GM12878 (cell line): ENCODE measurements at regions of chr9 and their contacts with region 1.

Region 1: DNA sequence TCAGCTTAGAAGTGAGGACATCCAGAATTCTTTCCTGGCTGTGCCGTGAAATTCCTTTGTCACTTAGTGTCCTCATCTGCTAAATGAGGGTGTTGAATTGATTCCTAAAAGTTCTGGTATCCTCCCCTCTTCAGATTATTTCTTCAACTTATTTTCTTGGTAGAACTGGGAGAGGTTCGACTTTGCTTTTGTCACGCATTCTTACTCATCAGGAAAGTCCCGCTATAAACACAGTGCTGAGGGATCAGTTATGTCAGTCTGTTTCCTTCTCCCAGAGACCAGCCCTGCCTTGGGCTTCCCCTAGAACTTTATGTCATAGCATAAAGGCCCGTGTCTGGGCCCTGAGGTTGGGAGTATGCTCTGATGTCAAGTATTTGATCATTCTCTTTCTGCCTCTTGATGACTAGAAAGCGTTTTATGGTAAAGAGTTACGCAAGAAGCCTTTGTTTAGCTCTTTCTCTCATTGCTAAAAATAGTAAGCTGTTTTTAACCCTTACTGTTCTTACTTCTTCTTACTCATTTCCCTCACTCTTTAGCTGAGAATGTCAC is 29.6 kb downstream of the MTAP start:
- DNase-seq: peak; percentile 71
- ATAC-seq: peak; percentile 88
- H3K4me3 ChIP-seq: peak overlapping the region; percentile 24; the same call in 1 of the 2 replicates
- H3K27ac ChIP-seq: peak overlapping the region; percentile 77
- H3K4me1 ChIP-seq: peaks cover 38% of the 10 kb centered on the region
- H3K27me3 ChIP-seq: no peaks in the 10 kb centered on the region
- CTCF ChIP-seq: no peak
- EP300 ChIP-seq: peak; percentile 62 to 71; a peak in 2 of 4 replicates
- POLR2A ChIP-seq: no peak
- RAD21 ChIP-seq: no peak

Region 2: GRCh38 chr9:21119093-21119770 is 712.8 kb before region 1 on chr9:
- CTCF ChIA-PET with region 1: no interaction called
- POLR2A ChIA-PET with region 1: no interaction called
- RAD21 ChIA-PET with region 1: no interaction called
- SMC1A ChIA-PET with region 1: no interaction called
- in situ Hi-C with region 1: no loop called
- intact Hi-C with region 1: no loop called
- DNase-seq: no peak
- ATAC-seq: peak; percentile 69
- H3K4me3 ChIP-seq: no peak overlapping the region
- H3K27ac ChIP-seq: no peak overlapping the region
- H3K4me1 ChIP-seq: peaks cover 10% of the 10 kb centered on the region
- H3K27me3 ChIP-seq: no peaks in the 10 kb centered on the region
- CTCF ChIP-seq: no peak
- EP300 ChIP-seq: no peak
- POLR2A ChIP-seq: no peak
- RAD21 ChIP-seq: no peak

Region 3: DNA sequence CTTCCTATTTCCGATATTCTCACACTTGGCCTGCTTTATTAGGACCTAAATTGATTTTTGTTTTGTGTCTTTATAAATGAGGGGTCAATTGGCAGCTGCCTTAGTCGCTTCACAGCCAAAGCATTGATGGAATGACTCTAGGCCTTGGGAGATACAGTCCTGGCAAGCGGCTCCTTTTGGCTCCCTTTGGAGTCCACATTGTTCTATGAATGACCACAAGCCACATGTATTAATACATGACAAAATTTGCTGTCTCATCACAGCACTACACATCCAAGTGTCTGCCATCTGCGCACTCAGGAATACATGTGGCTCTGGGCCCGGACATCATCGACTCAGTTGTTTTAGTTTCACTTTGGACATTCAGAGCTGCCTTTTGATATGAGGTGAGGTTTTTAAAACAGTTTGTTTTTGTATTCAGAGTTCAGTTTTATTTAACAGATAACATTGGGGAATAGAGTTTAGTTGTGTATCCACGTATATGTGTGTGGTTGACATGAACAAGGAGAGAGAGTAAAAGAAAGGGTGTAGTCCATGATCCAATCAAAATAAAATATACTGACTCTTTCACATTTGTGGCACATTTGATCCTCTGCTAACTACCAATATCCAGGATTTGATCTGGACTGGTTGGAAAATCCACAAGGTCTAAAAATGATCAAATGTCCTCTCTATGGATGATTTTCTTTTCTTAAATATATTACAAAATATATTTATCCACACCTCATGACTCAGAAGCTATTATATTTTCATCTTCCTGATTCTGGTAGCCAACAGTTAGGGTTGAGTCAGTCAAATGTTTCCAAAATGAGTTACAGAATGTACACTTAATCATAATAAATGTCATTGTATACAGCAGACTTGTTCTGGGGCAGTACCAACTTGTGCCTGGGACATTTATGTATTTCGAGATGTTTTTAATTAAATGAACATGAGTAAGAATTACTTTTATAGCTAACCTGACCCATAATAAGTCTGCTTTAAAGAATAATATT is 143.6 kb before region 1 on chr9:
- CTCF ChIA-PET with region 1: no interaction called
- POLR2A ChIA-PET with region 1: no interaction called
- RAD21 ChIA-PET with region 1: no interaction called
- SMC1A ChIA-PET with region 1: no interaction called
- in situ Hi-C with region 1: no loop called
- intact Hi-C with region 1: no loop called
- DNase-seq: no peak
- ATAC-seq: no peak
- H3K4me3 ChIP-seq: no peak overlapping the region
- H3K27ac ChIP-seq: no peak overlapping the region
- H3K4me1 ChIP-seq: no peaks in the 10 kb centered on the region
- H3K27me3 ChIP-seq: no peaks in the 10 kb centered on the region; a peak in 2 of 4 replicates
- CTCF ChIP-seq: no peak
- EP300 ChIP-seq: no peak
- POLR2A ChIP-seq: no peak
- RAD21 ChIP-seq: no peak

Region 4: GRCh38 chr9:21796768-21797167 is 35.3 kb before region 1 on chr9:
- CTCF ChIA-PET with region 1: no interaction called
- POLR2A ChIA-PET with region 1: no interaction called
- RAD21 ChIA-PET with region 1: no interaction called
- SMC1A ChIA-PET with region 1: no interaction called
- in situ Hi-C with region 1: no loop called
- intact Hi-C with region 1: no loop called
- DNase-seq: no peak
- ATAC-seq: no peak
- H3K4me3 ChIP-seq: no peak overlapping the region
- H3K27ac ChIP-seq: no peak overlapping the region
- H3K4me1 ChIP-seq: peaks cover 5% of the 10 kb centered on the region
- H3K27me3 ChIP-seq: peaks cover 0 to 19% of the 10 kb centered on the region in 2 experiments; a peak in 2 of 4 replicates
- CTCF ChIP-seq: no peak
- EP300 ChIP-seq: no peak
- POLR2A ChIP-seq: no peak
- RAD21 ChIP-seq: no peak

Region 5: DNA sequence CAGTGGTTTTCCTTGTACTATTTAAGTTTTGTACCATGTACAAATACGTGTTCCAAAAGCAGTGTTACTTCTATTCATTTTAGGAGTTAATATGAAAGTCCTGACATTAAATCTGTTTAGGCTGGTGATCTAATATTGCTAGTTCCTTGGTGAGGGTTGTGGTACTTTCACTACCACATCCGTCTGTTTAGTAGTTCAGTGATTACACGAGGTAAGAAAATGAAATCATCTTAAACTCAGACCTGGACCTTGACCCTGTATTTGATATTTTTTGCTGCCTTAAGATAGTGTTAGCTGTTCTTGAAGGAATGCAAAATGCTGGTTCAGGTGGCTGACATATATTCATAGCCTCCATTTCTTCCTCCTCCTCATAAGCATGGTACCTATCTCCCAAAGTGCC is 20.7 kb after region 1 on chr9:
- CTCF ChIA-PET with region 1: interaction called, 5 read pairs
- POLR2A ChIA-PET with region 1: no interaction called
- RAD21 ChIA-PET with region 1: no interaction called
- SMC1A ChIA-PET with region 1: interaction called, 3 read pairs
- in situ Hi-C with region 1: no loop called
- intact Hi-C with region 1: loop called (anchors 1 kb)
- DNase-seq: peak; percentile 27
- ATAC-seq: peak; percentile 99
- H3K4me3 ChIP-seq: no peak overlapping the region
- H3K27ac ChIP-seq: no peak overlapping the region
- H3K4me1 ChIP-seq: peaks cover 5% of the 10 kb centered on the region; the same call in 1 of the 2 replicates
- H3K27me3 ChIP-seq: no peaks in the 10 kb centered on the region
- CTCF ChIP-seq: no peak
- EP300 ChIP-seq: peak in 1 of 2 experiments; percentile 72; a peak in 1 of 4 replicates
- POLR2A ChIP-seq: no peak
- RAD21 ChIP-seq: no peak

Region 6: DNA sequence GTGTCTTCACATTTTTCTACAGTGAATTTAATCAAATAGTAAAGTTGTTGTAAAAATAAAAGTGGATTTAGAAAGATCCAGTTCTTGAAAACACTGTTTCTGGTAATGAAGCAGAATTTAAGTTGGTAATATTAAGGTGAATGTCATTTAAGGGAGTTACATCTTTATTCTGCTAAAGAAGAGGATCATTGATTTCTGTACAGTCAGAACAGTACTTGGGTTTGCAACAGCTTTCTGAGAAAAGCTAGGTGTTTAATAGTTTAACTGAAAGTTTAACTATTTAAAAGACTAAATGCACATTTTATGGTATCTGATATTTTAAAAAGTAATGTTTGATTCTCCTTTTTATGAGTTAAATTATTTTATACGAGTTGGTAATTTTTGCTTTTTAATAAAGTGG is 30.8 kb after region 1 on chr9:
- CTCF ChIA-PET with region 1: interaction called, 4 read pairs
- POLR2A ChIA-PET with region 1: no interaction called
- RAD21 ChIA-PET with region 1: interaction called, 3 read pairs
- SMC1A ChIA-PET with region 1: interaction called, 10 read pairs
- in situ Hi-C with region 1: no loop called
- intact Hi-C with region 1: no loop called
- DNase-seq: no peak
- ATAC-seq: peak; percentile 57
- H3K4me3 ChIP-seq: no peak overlapping the region
- H3K27ac ChIP-seq: no peak overlapping the region
- H3K4me1 ChIP-seq: no peaks in the 10 kb centered on the region
- H3K27me3 ChIP-seq: no peaks in the 10 kb centered on the region
- CTCF ChIP-seq: no peak
- EP300 ChIP-seq: no peak
- POLR2A ChIP-seq: no peak
- RAD21 ChIP-seq: no peak

Region 7: DNA sequence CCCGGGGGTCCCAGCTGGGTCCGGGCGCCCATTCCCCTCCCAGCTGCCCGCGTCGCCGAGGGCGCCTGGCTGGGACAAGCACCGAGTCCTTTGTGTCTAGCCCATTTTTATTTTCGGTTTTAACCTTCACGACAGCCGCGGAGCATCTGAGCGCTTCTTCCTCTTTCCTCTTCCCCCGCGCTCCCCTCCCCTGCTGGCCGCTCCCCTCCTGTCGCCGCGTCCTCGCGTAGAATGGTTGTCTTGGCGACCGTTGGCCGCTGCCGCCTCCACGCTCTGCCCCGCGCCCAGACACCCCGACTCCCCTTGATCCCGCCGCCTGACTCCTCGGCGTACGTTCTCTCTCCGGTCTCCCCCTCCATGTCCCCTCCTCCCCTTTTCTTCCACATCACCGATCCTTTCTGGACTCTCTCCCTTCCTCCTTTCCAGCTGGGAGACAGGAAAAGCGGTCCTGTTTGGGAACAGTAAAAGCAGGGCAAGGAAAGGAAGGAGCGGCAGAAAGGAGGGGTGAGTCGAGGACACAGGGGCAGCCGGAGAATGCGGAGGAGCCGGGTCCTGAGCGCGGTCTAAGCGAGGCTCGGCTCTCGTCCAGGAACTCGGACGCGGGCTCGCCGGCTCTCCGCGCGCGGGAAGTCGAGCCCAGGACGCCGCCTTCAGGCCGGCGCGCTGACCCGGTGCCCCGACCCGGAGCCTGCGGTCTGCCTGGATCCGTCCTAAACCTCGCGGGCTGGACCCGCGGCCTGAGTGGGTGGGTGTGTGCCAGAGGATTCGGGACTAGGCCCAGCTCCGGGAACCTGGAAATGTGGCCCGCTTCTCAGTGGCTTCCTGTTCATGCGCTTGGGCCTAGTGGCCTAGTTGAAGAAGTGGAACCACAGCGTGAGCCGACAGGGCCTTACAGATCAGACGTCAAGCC is 163.4 kb after region 1 on chr9:
- CTCF ChIA-PET with region 1: interaction called, 4 read pairs
- POLR2A ChIA-PET with region 1: no interaction called
- RAD21 ChIA-PET with region 1: interaction called, 3 read pairs
- SMC1A ChIA-PET with region 1: interaction called, 3 read pairs
- in situ Hi-C with region 1: no loop called
- intact Hi-C with region 1: loop called (anchors 5 kb)
- DNase-seq: peak; percentile 55
- ATAC-seq: peak; percentile 82
- H3K4me3 ChIP-seq: peak overlapping the region; percentile 89
- H3K27ac ChIP-seq: peak overlapping the region; percentile 91
- H3K4me1 ChIP-seq: peaks cover 4% of the 10 kb centered on the region; the same call in 1 of the 2 replicates
- H3K27me3 ChIP-seq: no peaks in the 10 kb centered on the region
- CTCF ChIP-seq: peak in 2 of 3 experiments; percentile 12 to 30; a peak in 4 of 6 replicates
- EP300 ChIP-seq: no peak
- POLR2A ChIP-seq: peak; percentile 69
- RAD21 ChIP-seq: no peak